OCI-LY7 (cell line): ENCODE measurements at regions of chr12 and their contacts with region 1.

Region 1: GRCh38 chr12:53500776-53501614 is at the start of gene TARBP2:
- DNase-seq: peak; percentile 99
- H3K4me3 ChIP-seq: peak within 1 kb of the TSS; percentile 77
- H3K27ac ChIP-seq: peak within 1 kb of the TSS; percentile 77
- H3K4me1 ChIP-seq: peaks cover 45% of the 10 kb centered on the region
- CTCF ChIP-seq: no peak
- total RNA-seq, gene TARBP2: 49.1 and 62.6 TPM in 2 replicates

Region 2: DNA sequence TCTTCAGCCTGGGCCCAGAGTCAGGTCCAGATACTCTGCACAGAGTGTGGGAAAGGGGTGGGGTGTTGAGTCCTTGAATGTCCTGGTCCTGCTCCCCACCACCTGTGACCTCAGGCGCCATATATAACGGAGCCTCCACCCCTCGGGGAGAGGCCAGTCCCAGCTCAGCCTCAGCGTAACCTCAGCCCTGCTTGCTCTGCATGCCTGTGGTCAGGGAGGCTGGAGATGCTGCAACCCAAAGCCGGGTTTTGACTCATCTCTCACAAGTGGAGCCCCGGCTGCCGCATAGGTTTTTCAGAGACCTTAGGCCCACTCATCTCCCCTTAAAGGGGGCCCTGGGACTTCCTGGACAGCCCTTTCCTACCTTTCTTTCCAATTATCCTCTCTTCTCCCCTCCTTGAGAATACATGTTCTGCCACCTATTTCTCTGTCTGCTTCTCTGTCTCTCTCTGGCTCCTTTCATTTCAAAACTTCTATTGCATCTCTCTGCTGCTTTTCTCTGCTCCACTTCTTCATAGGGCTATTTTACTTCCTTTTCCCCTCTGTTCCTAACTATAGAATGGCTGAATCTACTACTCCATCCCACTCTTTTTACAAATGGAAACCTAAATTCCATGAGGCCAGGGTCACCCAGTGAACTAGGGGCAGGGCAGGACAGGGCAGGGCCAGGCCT is 295.1 kb before region 1 on chr12:
- CTCF ChIA-PET with region 1: no interaction called
- POLR2A ChIA-PET with region 1: no interaction called
- intact Hi-C with region 1: loop called (anchors 10 kb)
- DNase-seq: peak; percentile 74
- H3K4me3 ChIP-seq: peak overlapping the region; percentile 83
- H3K27ac ChIP-seq: peak overlapping the region; percentile 98
- H3K4me1 ChIP-seq: peaks cover 79% of the 10 kb centered on the region
- CTCF ChIP-seq: no peak

Region 3: DNA sequence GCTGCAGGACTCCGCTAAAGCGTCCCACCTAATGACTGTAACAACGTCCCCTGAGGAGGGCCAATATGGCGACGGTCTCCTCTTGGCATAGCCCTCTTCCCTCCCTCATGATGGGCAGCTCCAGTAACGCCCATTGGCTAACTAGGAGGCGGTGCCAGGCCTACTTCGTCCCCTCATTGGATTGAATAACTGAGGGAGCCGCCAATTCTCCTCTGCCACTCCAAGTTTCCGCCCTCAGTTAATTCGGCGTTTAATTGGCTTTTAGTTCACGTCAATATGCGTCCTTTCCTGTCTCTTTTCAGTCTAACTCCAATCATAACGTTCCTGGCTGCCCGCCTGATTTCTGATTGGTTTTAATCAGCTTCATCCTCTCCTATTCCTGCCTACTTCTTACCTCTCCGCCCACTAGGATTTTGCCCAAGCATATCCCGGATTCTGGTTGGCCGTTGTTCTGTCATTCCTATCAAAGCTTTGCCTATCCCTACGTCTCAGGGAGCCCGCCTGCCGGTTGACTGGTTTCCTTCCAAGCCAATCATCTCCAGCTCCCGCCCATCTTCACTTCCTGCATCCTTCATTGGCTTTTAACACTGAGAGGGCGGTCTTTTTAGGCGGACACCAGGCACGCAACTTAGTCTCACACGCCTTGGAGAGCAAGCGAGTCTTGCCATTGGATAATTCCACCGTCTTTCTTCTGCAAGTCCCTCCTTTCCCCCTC is 121.4 kb before region 1 on chr12:
- CTCF ChIA-PET with region 1: interaction called, 5 read pairs
- POLR2A ChIA-PET with region 1: interaction called, 6 read pairs
- intact Hi-C with region 1: loop called (anchors 2 kb)
- DNase-seq: peak; percentile 100
- H3K4me3 ChIP-seq: peak overlapping the region; percentile 86
- H3K27ac ChIP-seq: peak overlapping the region; percentile 77
- H3K4me1 ChIP-seq: peaks cover 45% of the 10 kb centered on the region
- CTCF ChIP-seq: no peak

Region 4: GRCh38 chr12:53451661-53452158 is 49.3 kb before region 1 on chr12 and contains the start of gene PCBP2:
- CTCF ChIA-PET with region 1: no interaction called
- POLR2A ChIA-PET with region 1: interaction called, 4 read pairs
- intact Hi-C with region 1: loop called (anchors 1 kb)
- DNase-seq: peak; percentile 100
- H3K4me3 ChIP-seq: peak within 1 kb of the TSS; percentile 96
- H3K27ac ChIP-seq: peak within 1 kb of the TSS; percentile 82
- H3K4me1 ChIP-seq: peaks cover 19% of the 10 kb centered on the region
- CTCF ChIP-seq: peak; percentile 90
- total RNA-seq, gene PCBP2: 183 and 209 TPM in 2 replicates